ENCODE measurements at regions of chr4 and their contacts with region 1.

Region 1: DNA sequence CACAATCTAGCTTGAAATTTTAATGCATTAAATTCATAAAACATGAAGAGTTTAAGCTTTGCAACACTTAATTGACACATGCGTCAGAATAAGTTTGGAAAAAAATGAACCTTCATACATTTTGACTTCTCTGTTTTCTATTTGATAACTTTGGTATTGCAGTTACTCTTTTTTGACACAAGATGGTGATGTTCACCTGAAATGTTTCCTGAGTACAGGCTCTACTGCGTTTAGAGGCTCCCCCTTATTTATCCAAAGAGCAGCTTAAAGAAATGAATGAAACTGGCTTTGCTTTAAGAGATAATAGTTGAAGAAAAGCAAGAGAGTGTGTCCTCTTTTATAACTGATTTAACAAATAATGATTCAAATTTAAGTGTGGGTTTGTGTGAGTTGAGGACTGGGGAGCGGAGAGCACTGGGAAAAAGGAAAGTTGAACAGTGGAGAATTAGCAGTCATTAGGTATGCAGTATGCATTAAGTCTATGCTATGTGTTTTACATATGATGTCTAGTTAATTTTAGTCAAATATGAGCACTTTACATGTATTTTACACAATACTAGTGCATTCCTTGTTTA is 180.6 kb upstream of the NUDT6 start:
- DNase-seq: no peak

Region 2: DNA sequence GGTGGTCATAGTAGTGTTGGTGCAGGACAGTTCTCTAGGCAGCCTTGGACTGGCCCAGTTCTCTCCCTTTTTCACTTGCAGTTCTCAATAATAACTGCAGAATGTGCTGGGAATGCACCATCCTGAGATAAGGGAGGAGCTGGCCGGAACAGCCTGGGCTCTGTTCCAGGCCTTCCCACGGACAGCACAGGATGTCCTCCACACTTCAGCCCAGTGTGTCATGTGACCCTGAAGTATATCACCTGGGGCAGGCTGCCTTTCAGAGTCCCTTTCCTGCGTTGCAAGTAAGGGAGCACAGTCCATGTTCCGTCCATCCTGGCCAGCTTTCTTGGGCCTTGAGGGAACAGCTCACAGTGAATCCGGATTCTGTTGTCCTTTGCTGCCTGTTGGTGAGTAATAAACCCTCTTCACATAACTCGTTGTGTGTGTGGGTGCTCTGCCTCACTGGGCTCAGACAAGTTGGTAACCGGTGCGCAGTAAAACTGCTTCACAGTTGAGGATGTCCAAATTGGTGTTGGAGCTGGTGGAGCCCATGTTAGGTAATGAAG is 402.7 kb before region 1 on chr4:
- intact Hi-C with region 1: no loop called
- DNase-seq: peak; percentile 82

Region 3: DNA sequence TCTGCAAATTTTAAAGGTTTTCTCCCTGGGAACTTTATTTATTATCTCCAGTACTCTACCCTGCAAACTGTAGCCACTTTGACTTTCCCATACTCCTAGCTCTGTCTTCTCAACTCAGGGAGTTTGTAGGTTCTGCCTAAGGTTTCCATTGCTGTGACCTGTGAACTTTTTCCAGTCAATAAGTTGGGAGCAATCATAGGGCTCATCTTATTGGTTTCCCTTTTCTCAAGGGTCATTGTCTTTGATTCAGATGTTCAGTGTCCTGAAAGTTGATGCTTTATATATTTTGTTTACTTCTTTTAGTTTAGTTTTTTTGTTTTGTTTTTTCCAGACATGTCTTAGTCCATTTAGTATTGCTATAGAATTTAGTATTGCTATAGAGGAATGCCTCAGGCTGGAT is 95.3 kb before region 1 on chr4:
- intact Hi-C with region 1: no loop called
- DNase-seq: no peak

Region 4: DNA sequence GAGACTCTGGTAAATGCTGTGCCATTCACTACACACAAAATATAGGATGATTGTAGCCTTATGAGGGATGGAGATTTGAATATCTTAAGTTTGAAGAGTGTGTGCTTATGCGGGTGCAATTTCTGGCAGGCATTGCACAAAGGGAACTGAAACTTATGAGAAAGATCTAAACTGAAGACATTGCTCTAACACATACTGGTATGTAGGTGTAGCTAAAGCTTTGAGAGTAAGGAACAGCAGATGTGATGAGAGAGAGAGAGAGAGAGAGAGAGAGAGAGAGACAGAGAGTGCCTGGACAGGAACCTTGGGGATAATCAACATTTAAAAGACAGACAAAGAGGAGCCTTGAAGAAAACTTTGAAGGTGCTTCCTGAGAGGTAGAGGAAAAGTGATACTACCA is 673.3 kb after region 1 on chr4:
- intact Hi-C with region 1: loop called (anchors 10 kb)
- DNase-seq: no peak

Region 5: GRCh38 chr4:123826896-123827295 is 723.9 kb after region 1 on chr4:
- intact Hi-C with region 1: loop called (anchors 5 kb)
- DNase-seq: no peak

Region 6: GRCh38 chr4:124262211-124263179 is 1159.5 kb after region 1 on chr4:
- intact Hi-C with region 1: loop called (anchors 2 kb)
- DNase-seq: no peak